ENCODE measurements at regions of chr1 and their contacts with region 1.

Region 1: GRCh38 chr1:46527474-46528296 is 23.8 kb downstream of the KNCN start:
- DNase-seq: peak; percentile 61 to 81
- ATAC-seq: peak; percentile 62 to 68 (median 62)
- H3K4me3 ChIP-seq: no peak overlapping the region
- H3K4me3 Mint-ChIP-seq: no peak overlapping the region
- H3K27ac ChIP-seq: no peak overlapping the region
- H3K27ac Mint-ChIP-seq: no peak overlapping the region
- H3K4me1 ChIP-seq: peaks cover 6% of the 10 kb centered on the region
- H3K4me1 Mint-ChIP-seq: no peaks in the 10 kb centered on the region
- H3K27me3 ChIP-seq: peaks cover 6% of the 10 kb centered on the region
- H3K27me3 Mint-ChIP-seq: peaks cover 29 to 33% of the 10 kb centered on the region in 2 donors
- CTCF ChIP-seq: peak; percentile 77

Region 2: DNA sequence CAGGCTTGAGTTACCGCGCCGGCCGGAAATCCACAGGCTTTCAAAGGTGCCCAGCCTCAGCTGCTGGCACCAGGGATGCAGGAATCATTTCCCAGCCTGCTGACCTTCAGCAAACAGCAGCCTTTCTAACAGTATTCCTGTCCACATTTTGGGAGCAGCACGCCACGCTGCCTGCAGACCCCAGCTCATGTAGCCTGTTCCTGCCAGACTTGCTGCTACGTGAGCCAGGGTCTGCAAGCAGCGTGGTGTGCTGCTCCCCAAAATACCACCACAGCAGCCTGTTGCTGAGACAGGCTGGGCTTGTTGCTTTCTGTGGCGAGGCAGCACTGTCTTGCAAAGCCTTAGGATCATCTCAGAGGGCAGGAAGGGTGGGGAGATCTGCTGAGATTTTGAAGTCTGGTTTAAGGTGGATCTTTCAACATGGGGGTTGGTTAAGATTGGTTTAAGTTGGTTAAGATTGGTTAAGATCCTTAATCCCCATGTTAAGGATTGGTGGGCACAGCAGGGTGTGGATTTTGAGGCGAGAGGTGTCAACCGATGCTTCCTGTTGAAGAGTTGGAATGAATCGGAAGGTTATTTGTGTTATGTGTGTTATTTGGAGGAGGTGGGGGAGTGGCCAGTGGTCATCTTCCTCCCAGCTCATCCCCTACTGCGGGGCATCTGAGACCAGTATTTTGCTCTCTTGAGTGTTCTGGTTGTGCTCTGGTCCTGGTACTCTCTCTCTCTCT is 120.6 kb before region 1 on chr1:
- intact Hi-C with region 1: loop called (anchors 2 kb)
- DNase-seq: no peak
- ATAC-seq: no peak
- H3K4me3 ChIP-seq: no peak overlapping the region
- H3K4me3 Mint-ChIP-seq: no peak overlapping the region
- H3K27ac ChIP-seq: no peak overlapping the region
- H3K27ac Mint-ChIP-seq: no peak overlapping the region
- H3K4me1 ChIP-seq: peaks cover 21% of the 10 kb centered on the region
- H3K4me1 Mint-ChIP-seq: peaks cover 8 to 14% of the 10 kb centered on the region in 2 donors
- H3K27me3 ChIP-seq: no peaks in the 10 kb centered on the region
- H3K27me3 Mint-ChIP-seq: no peaks in the 10 kb centered on the region
- CTCF ChIP-seq: no peak

Region 3: GRCh38 chr1:46446646-46447498 is 80.8 kb before region 1 on chr1:
- intact Hi-C with region 1: loop called (anchors 1 kb)
- DNase-seq: peak; percentile 57 to 83
- ATAC-seq: peak in 1 of 3 donors; percentile 62
- H3K4me3 ChIP-seq: no peak overlapping the region
- H3K4me3 Mint-ChIP-seq: no peak overlapping the region
- H3K27ac ChIP-seq: no peak overlapping the region
- H3K27ac Mint-ChIP-seq: no peak overlapping the region
- H3K4me1 ChIP-seq: peaks cover 15% of the 10 kb centered on the region
- H3K4me1 Mint-ChIP-seq: peaks cover 14 to 36% of the 10 kb centered on the region in 2 donors
- H3K27me3 ChIP-seq: peaks cover 13% of the 10 kb centered on the region
- H3K27me3 Mint-ChIP-seq: peaks cover 55 to 79% of the 10 kb centered on the region in 2 donors
- CTCF ChIP-seq: peak; percentile 78

Region 4: DNA sequence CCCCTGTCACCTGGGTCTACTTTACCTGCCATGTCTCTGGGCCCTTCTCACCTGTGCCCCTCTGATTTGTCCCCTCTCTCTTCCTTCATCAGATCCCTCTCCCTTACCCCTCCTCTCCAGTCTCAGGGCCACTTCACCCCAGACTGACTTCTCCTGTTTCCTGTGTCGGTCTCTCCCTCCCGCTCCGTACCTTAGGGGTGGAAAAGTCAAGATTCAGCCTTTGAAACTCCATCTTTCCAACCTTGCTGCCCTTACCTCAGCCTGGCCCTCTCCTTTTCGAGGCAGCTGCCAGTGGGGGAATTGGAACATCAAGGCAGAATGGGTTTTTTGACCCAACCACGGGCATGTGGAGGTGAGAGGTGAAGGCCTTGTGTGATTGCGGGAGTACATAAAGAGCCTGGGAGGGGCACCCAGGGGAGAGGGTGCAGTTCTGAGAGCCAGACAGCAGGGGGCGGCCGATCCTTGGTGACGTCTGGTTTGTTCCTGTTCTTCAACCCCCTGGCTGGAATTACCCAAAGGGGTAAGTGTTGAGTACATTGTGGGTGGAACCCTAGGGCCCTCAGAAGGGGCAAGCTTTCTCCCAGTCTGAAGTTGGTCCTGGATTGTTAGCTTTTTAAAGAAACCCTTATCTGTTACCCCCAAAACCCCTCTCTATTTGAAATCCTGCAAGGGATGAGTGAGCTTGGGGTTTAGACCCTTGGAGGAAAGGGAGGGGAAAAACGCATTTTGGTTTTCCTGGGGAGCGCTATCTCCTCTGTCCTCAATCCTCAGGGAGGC is 50.3 kb before region 1 on chr1:
- intact Hi-C with region 1: loop called (anchors 1 kb)
- DNase-seq: peak; percentile 67 to 82
- ATAC-seq: peak; percentile 79 to 99 (median 97)
- H3K4me3 ChIP-seq: no peak overlapping the region
- H3K4me3 Mint-ChIP-seq: no peak overlapping the region
- H3K27ac ChIP-seq: no peak overlapping the region
- H3K27ac Mint-ChIP-seq: peak overlapping the region in 1 of 2 donors; percentile 10
- H3K4me1 ChIP-seq: no peaks in the 10 kb centered on the region
- H3K4me1 Mint-ChIP-seq: no peaks in the 10 kb centered on the region
- H3K27me3 ChIP-seq: no peaks in the 10 kb centered on the region
- H3K27me3 Mint-ChIP-seq: peaks cover 18 to 22% of the 10 kb centered on the region in 2 donors
- CTCF ChIP-seq: peak; percentile 79